CD4-positive, alpha-beta T cell (primary cell): ENCODE measurements at regions of chr13 and their contacts with region 1.

Region 1: GRCh38 chr13:42271337-42272114 is 426 bp upstream of the AKAP11 start:
- DNase-seq: peak; percentile 82 to 99 (median 90)
- ATAC-seq: peak; percentile 84
- H3K4me3 ChIP-seq: peak overlapping the region; percentile 87
- H3K4me3 Mint-ChIP-seq: peak overlapping the region; percentile 99
- H3K27ac ChIP-seq: peak overlapping the region; percentile 91 to 96
- H3K27ac Mint-ChIP-seq: no peak overlapping the region
- H3K4me1 ChIP-seq: peaks cover 39% of the 10 kb centered on the region
- H3K4me1 Mint-ChIP-seq: peaks cover 53% of the 10 kb centered on the region
- H3K27me3 ChIP-seq: no peaks in the 10 kb centered on the region
- H3K27me3 Mint-ChIP-seq: no peaks in the 10 kb centered on the region
- CTCF ChIP-seq: no peak

Region 2: GRCh38 chr13:40908546-40908945 is 1363.0 kb before region 1 on chr13:
- CTCF ChIA-PET with region 1: no interaction called
- POLR2A ChIA-PET with region 1: no interaction called
- intact Hi-C with region 1: no loop called
- DNase-seq: no peak
- ATAC-seq: no peak
- H3K4me3 ChIP-seq: no peak overlapping the region
- H3K4me3 Mint-ChIP-seq: no peak overlapping the region
- H3K27ac ChIP-seq: no peak overlapping the region
- H3K27ac Mint-ChIP-seq: no peak overlapping the region
- H3K4me1 ChIP-seq: no peaks in the 10 kb centered on the region
- H3K4me1 Mint-ChIP-seq: peaks cover 11% of the 10 kb centered on the region
- H3K27me3 ChIP-seq: no peaks in the 10 kb centered on the region
- H3K27me3 Mint-ChIP-seq: no peaks in the 10 kb centered on the region
- CTCF ChIP-seq: no peak

Region 3: GRCh38 chr13:41132512-41133152 is 1138.9 kb before region 1 on chr13 and contains the start of gene KBTBD6:
- CTCF ChIA-PET with region 1: no interaction called
- POLR2A ChIA-PET with region 1: no interaction called
- intact Hi-C with region 1: loop called in 1 of 2 experiments (anchors 5 kb)
- DNase-seq: peak; percentile 81 to 96 (median 88)
- ATAC-seq: peak; percentile 96
- H3K4me3 ChIP-seq: peak within 1 kb of the TSS; percentile 91
- H3K4me3 Mint-ChIP-seq: peak within 1 kb of the TSS; percentile 96
- H3K27ac ChIP-seq: peak within 1 kb of the TSS; percentile 50 to 68
- H3K27ac Mint-ChIP-seq: peak within 1 kb of the TSS; percentile 86
- H3K4me1 ChIP-seq: peaks cover 37% of the 10 kb centered on the region
- H3K4me1 Mint-ChIP-seq: peaks cover 54% of the 10 kb centered on the region
- H3K27me3 ChIP-seq: no peaks in the 10 kb centered on the region
- H3K27me3 Mint-ChIP-seq: no peaks in the 10 kb centered on the region
- CTCF ChIP-seq: no peak
- total RNA-seq, gene KBTBD6: 6.8 to 7.2 TPM

Region 4: GRCh38 chr13:41960639-41961465 is 310.7 kb before region 1 on chr13 and contains the start of gene VWA8:
- CTCF ChIA-PET with region 1: no interaction called
- POLR2A ChIA-PET with region 1: no interaction called
- intact Hi-C with region 1: loop called in 1 of 2 experiments (anchors 5 kb)
- DNase-seq: peak; percentile 72 to 91 (median 82)
- ATAC-seq: peak; percentile 96
- H3K4me3 ChIP-seq: peak within 1 kb of the TSS; percentile 90
- H3K4me3 Mint-ChIP-seq: peak within 1 kb of the TSS; percentile 92
- H3K27ac ChIP-seq: peak within 1 kb of the TSS; percentile 39 to 82
- H3K27ac Mint-ChIP-seq: peak within 1 kb of the TSS; percentile 94
- H3K4me1 ChIP-seq: peaks cover 21% of the 10 kb centered on the region
- H3K4me1 Mint-ChIP-seq: peaks cover 54% of the 10 kb centered on the region
- H3K27me3 ChIP-seq: no peaks in the 10 kb centered on the region
- H3K27me3 Mint-ChIP-seq: no peaks in the 10 kb centered on the region
- CTCF ChIP-seq: no peak
- total RNA-seq, gene VWA8: 18.7 to 19.0 TPM

Region 5: DNA sequence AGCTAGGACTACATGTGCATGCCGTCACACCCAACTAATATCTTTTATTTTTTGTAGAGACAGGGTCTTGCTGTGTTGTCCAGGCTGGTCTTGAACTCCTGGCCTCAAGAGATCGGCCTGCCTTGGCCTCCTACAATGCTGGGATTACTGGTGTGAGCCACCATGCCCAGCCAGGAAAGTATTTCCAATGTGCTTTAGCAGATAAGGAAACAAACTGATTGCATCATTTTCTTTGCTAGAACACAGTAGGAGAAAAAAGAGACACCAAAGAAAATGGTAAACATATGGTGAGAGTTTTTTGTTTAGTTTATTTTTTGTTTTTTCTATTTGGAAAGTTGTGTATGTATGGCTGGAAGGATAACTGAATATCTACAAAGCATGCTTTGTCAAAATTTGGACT is 46.5 kb before region 1 on chr13:
- CTCF ChIA-PET with region 1: no interaction called
- POLR2A ChIA-PET with region 1: no interaction called
- intact Hi-C with region 1: loop called in 1 of 2 experiments (anchors 1 kb)
- DNase-seq: no peak
- ATAC-seq: no peak
- H3K4me3 ChIP-seq: no peak overlapping the region
- H3K4me3 Mint-ChIP-seq: no peak overlapping the region
- H3K27ac ChIP-seq: no peak overlapping the region
- H3K27ac Mint-ChIP-seq: no peak overlapping the region
- H3K4me1 ChIP-seq: no peaks in the 10 kb centered on the region
- H3K4me1 Mint-ChIP-seq: no peaks in the 10 kb centered on the region
- H3K27me3 ChIP-seq: no peaks in the 10 kb centered on the region
- H3K27me3 Mint-ChIP-seq: no peaks in the 10 kb centered on the region
- CTCF ChIP-seq: no peak

Region 6: DNA sequence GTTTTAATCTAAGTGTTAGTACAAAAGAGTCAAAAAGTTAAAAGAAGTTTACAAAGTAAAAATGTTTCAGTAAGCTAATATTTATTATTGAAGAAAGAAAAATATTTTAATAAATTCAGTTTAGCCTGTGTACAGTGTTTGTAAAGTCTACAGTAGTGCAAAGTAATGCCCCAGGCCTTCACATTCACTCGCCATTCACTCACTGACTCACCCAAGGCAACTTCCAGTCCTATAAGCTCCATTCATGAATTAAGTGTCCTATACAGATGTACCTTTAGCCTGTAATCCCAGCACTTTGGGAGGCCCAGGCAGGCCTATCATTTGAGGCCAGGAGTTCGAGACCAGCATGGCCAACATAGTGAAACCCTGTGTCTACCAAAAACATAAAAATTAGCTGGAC is 23.6 kb before region 1 on chr13:
- CTCF ChIA-PET with region 1: no interaction called
- POLR2A ChIA-PET with region 1: no interaction called
- intact Hi-C with region 1: no loop called
- DNase-seq: no peak
- ATAC-seq: no peak
- H3K4me3 ChIP-seq: no peak overlapping the region
- H3K4me3 Mint-ChIP-seq: no peak overlapping the region
- H3K27ac ChIP-seq: no peak overlapping the region
- H3K27ac Mint-ChIP-seq: no peak overlapping the region
- H3K4me1 ChIP-seq: no peaks in the 10 kb centered on the region
- H3K4me1 Mint-ChIP-seq: no peaks in the 10 kb centered on the region
- H3K27me3 ChIP-seq: no peaks in the 10 kb centered on the region
- H3K27me3 Mint-ChIP-seq: peaks cover 4% of the 10 kb centered on the region
- CTCF ChIP-seq: no peak

Region 7: DNA sequence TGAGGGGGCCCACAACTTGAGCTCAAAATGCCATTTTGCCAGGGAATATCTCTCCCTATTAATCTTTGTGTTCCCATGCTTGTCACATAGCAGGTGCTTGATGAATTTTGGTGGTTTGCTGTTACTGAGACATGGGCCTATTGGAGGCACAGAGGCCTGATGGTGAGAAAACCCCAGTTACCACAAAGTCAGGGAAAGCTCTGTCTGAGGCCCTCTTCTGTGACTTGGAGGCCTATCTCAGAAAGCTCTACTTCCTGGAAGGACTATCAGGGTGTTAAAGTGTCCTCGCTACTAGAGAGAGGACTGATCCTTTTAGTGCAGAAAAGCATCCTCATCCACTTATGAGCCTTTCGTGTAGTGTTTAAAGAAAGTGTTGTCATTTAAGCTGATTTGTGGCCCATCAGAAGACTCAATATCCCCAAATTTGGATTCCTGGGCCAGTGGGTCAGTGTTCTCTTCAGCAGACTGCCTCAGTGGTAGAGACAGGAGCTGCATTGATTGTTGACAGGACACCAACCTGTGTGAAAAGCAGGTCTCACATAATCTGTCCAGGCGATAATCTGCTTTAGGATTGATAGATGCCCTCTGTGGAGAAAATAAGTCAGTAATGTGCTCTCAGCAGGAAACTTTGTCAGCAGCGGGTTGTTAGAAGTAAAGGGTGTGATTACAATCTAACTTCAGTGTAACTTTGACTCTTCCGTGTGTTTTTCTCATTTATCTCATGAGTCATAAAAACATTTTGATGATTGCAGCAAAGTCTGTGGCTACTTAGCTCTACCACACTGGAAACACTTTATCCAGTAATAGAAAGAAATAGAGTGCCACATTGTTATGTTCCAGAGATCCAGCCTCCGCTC is 121.4 kb after region 1 on chr13:
- CTCF ChIA-PET with region 1: no interaction called
- POLR2A ChIA-PET with region 1: interaction called, 12 read pairs
- intact Hi-C with region 1: loop called in 1 of 2 experiments (anchors 10 kb)
- DNase-seq: peak in 4 of 14 experiments; percentile 46 to 72 (median 64)
- ATAC-seq: peak; percentile 64
- H3K4me3 ChIP-seq: no peak overlapping the region
- H3K4me3 Mint-ChIP-seq: peak overlapping the region; percentile 50
- H3K27ac ChIP-seq: peak overlapping the region; percentile 55 to 60
- H3K27ac Mint-ChIP-seq: peak overlapping the region; percentile 83
- H3K4me1 ChIP-seq: peaks cover 61% of the 10 kb centered on the region
- H3K4me1 Mint-ChIP-seq: peaks cover 77% of the 10 kb centered on the region
- H3K27me3 ChIP-seq: no peaks in the 10 kb centered on the region
- H3K27me3 Mint-ChIP-seq: no peaks in the 10 kb centered on the region
- CTCF ChIP-seq: no peak